Right ventricle myocardium superior (tissue), 1 donor: ENCODE measurements at regions of chr11 and their contacts with region 1.

Region 1: GRCh38 chr11:1546536-1547400 is 25.3 kb downstream of the DUSP8 start:
- DNase-seq: no peak
- ATAC-seq: peak; percentile 76

Region 2: DNA sequence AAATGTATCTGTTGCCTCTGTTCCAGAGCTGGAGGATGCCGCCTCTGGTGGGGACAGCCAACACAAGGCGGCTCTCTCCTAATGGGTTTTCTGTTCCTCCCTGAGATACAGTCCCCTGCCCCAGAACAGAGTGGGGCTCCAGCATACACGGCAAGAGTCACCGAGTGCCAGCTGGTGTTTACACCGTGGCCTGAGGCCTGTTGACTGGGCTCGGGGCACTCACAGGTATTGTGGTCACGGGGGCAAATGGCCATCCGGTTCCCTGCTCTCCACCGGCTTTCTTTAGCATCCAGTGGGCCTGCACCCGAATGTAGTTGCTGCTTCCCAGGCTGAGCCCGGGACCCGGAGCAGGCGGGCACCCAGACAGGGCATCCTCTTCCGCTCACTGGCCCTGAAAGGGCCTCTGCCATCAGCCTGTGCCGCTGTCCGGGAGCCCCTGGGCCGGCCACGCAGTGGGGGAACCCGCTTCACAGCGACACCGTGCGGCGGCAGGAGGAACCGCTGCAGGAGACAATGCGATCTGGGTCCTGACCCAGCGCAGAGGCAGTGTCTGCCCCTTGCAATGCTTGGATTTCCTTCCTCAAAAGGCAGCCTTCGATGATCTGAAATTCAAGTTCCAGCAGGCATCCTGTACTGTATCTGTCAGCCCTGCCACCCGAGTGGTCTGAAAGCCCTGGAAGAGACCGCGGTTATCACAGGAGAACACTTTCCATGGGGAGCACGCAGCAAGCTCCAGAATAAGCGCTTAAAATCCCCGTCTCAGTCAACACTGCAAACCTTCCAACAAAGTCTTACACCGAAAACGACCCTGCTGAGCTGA is 81.9 kb after region 1 on chr11:
- intact Hi-C with region 1: loop called (anchors 10 kb)
- DNase-seq: peak; percentile 58
- ATAC-seq: peak; percentile 91